ENCODE measurements at regions of chr16 and their contacts with region 1.

Region 1: GRCh38 chr16:79601931-79602627 is 1.5 kb upstream of the MAF start:
- DNase-seq: peak; percentile 63 to 88
- ATAC-seq: peak; percentile 8 to 68 (median 51)
- H3K4me3 ChIP-seq: peak overlapping the region; percentile 57 to 85 (median 72)
- H3K27ac ChIP-seq: peak overlapping the region; percentile 64 to 96 (median 92)
- H3K4me1 ChIP-seq: peaks cover 0 to 19% (median 6%) of the 10 kb centered on the region in 9 donors
- H3K27me3 ChIP-seq: peaks cover 0 to 5% (median 0%) of the 10 kb centered on the region in 7 donors
- CTCF ChIP-seq: peak; percentile 68 to 85 (median 80)

Region 2: GRCh38 chr16:78235168-78235800 is 1366.8 kb before region 1 on chr16:
- intact Hi-C with region 1: loop called in 2 of 10 experiments (anchors 10 kb)
- DNase-seq: peak; percentile 64 to 71
- ATAC-seq: peak in 7 of 8 donors; percentile 53 to 79 (median 68)
- H3K4me3 ChIP-seq: no peak overlapping the region
- H3K27ac ChIP-seq: no peak overlapping the region
- H3K4me1 ChIP-seq: peaks cover 0 to 20% (median 6%) of the 10 kb centered on the region in 9 donors
- H3K27me3 ChIP-seq: no peaks in the 10 kb centered on the region
- CTCF ChIP-seq: peak; percentile 79 to 93 (median 89)

Region 3: GRCh38 chr16:78816499-78817195 is 785.4 kb before region 1 on chr16:
- intact Hi-C with region 1: loop called in 1 of 10 experiments (anchors 5 kb)
- DNase-seq: peak in 1 of 2 donors; percentile 28
- ATAC-seq: peak in 7 of 8 donors; percentile 54 to 75 (median 67)
- H3K4me3 ChIP-seq: no peak overlapping the region
- H3K27ac ChIP-seq: peak overlapping the region in 8 of 10 donors; percentile 16 to 84 (median 59)
- H3K4me1 ChIP-seq: peaks cover 6 to 36% (median 31%) of the 10 kb centered on the region in 9 donors
- H3K27me3 ChIP-seq: no peaks in the 10 kb centered on the region
- CTCF ChIP-seq: no peak

Region 4: GRCh38 chr16:79437764-79438751 is 164.0 kb before region 1 on chr16:
- intact Hi-C with region 1: loop called in 1 of 10 experiments (anchors 10 kb)
- DNase-seq: peak in 1 of 2 donors; percentile 48
- ATAC-seq: peak; percentile 49 to 86 (median 69)
- H3K4me3 ChIP-seq: peak overlapping the region in 7 of 10 donors; percentile 14 to 35 (median 21)
- H3K27ac ChIP-seq: peak overlapping the region in 8 of 10 donors; percentile 20 to 71 (median 48)
- H3K4me1 ChIP-seq: peaks cover 0 to 40% (median 17%) of the 10 kb centered on the region in 9 donors
- H3K27me3 ChIP-seq: no peaks in the 10 kb centered on the region
- CTCF ChIP-seq: no peak

Region 5: GRCh38 chr16:79770244-79771064 is 168.4 kb after region 1 on chr16:
- intact Hi-C with region 1: loop called in 3 of 10 experiments (anchors 5 to 10 kb)
- DNase-seq: peak; percentile 88 to 91
- ATAC-seq: peak; percentile 98 to 99 (median 99)
- H3K4me3 ChIP-seq: peak overlapping the region; percentile 12 to 69 (median 65)
- H3K27ac ChIP-seq: peak overlapping the region; percentile 20 to 80 (median 68)
- H3K4me1 ChIP-seq: peaks cover 0 to 37% (median 22%) of the 10 kb centered on the region in 9 donors
- H3K27me3 ChIP-seq: no peaks in the 10 kb centered on the region
- CTCF ChIP-seq: no peak